ENCODE measurements at regions of chr11 and their contacts with region 1.

Region 1: DNA sequence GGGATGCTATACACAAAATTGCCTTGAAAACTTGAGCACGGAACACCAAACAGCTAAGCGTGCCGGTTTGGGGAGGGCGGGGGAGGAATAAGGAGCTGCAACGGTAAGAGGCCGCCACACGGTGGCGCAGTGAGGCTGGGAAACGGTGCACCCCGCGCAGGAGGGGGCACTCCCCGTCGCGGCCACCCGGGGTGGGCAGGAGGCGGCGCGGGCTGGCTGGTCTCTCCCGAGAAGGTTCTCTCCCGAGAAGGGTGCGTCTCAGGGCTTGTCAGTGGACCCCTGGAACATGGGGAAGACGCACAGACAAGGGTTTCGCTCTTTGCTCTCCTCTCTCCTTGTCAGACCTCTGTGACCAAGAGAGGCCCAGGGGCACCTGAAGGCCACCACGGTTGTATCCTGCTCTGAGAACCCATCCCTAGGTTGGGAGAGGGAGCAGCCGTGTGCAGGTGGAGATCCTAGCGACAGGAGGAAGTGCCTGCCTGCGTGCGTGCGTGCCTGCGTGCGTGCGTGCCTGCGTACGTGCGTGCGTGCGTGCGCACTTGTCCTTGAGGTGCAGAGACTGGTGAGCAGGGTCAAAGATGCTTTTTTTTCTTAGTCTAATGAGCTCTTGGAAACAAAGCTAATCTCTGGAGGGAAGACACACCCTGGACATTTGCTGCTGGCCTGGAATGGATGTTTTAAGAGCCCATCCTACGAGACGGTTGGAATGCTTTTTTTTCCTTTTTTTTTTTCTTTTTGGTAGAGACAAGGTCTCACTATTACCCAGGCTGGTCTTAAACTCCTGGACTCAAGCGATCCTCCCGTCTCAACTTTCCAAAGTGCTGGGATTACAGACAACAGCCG is 18.1 kb upstream of the JAM3 start:
- DNase-seq: peak; percentile 49 to 94 (median 85)

Region 2: GRCh38 chr11:134068829-134069425 is 18.2 kb after region 1 on chr11 and contains the start of gene JAM3:
- intact Hi-C with region 1: loop called (anchors 1 kb)
- DNase-seq: peak; percentile 92 to 100 (median 98)

Region 3: GRCh38 chr11:134086376-134086775 is 35.6 kb after region 1 on chr11:
- intact Hi-C with region 1: no loop called
- DNase-seq: no peak

Region 4: DNA sequence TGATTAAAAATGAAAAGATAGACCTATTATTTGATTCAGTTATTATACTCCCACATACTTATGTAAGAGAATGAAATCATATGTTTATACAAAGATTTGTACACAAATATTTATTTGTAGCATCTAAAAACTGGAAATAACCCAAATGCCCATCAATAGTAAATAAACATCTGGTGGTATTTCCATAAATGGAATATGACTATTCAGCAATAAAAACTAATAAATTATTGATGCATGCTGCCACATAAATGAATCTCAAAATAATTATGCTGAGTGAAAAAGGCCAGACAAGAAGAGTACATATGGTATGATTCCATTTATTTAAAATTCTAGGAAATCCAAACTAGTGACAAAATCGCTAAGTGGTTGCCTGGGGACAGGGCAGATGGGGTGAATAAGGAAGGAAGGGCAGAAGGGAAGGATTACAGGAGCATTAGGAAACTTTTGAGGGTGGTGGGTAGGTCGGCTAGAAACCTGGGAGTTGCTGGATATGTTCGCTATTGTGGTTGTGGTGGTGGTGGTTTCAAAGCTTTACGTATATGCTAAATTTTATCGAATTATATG is 59.6 kb after region 1 on chr11:
- intact Hi-C with region 1: no loop called
- DNase-seq: no peak

Region 5: DNA sequence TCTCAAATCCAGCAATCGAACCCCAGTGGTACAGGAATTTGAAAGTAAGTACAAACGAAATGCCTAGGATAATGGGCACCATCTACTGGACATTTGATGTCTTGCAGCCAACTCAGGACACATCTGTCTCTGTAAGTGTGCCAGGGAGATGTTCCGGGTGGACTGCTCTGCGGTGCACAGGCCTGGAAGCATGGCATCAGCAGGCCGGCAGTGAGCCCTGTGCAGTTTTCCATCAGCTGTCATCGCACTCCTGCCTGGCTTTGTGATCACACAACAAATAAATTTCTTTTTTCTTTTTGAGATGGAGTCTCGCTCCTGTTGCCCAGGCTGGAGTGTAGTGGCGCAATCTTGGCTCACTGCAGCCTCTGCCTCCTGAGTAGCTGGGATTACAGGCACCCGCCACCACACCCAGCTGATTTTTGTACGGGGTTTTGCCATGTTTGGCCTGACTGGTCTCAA is 89.1 kb after region 1 on chr11:
- intact Hi-C with region 1: loop called (anchors 2 kb)
- DNase-seq: peak; percentile 42 to 95 (median 83)

Region 6: GRCh38 chr11:134223836-134224709 is 173.3 kb after region 1 on chr11 and contains the starts of genes NCAPD3 and VPS26B:
- intact Hi-C with region 1: loop called (anchors 10 kb)
- DNase-seq: peak; percentile 93 to 99 (median 96)